CD14-positive monocyte (primary cell): ENCODE measurements at regions of chr7 and their contacts with region 1.

Region 1: DNA sequence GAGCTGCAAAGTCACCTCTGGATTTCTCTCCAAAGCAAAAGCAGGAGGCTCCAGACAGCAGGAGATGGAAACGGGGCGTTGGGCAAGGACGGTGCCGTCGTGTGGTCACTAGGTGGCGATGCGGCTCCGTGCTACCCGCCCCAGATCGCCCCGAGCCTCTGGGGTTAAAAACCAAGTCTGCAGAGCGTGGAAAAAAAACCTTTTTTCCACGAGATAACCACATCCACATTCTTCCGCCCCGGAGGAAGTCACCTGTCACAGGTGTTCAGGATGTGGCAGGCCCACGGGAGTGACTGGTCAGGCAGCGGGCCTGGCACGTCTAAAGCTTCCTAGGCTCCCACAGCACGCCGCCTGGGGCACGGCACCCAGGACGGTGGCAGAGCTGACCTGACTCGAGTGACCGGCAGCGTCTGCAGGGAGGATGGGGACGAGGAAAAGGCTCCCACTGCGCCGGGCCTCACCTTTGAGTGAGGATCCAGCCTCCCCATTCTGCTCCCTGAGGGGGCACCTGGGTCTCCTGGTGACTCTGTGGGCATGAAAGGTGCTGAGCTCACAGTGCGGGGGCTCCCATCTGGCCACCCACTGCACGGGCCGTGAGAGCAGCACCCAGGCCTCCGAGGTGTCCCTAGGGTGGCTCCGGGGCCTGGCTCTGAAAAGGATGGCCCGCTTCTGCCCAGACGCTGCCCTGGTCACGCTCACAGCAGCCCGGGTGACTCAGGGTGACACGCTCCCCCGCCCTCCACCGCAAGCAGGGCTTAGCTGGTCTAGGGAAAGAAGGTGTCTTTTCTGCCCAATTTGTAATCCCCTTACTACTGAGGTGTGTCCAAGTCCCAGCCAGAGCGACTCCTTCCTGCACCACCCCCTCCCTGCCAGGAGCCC is 71.3 kb upstream of the TNRC18 start:
- DNase-seq: peak; percentile 69 to 73 (median 70)
- H3K4me3 ChIP-seq: peak overlapping the region; percentile 16 to 72 (median 44)
- H3K4me3 Mint-ChIP-seq: peak overlapping the region; percentile 66 to 80
- H3K27ac ChIP-seq: peak overlapping the region in 1 of 2 donors; percentile 63
- H3K27ac Mint-ChIP-seq: peak overlapping the region in 4 of 7 donors; percentile 58 to 75 (median 64)
- H3K4me1 ChIP-seq: peaks cover 24 to 35% of the 10 kb centered on the region in 2 donors
- H3K4me1 Mint-ChIP-seq: peaks cover 37% of the 10 kb centered on the region
- H3K27me3 ChIP-seq: no peaks in the 10 kb centered on the region
- H3K27me3 Mint-ChIP-seq: peaks cover 0 to 3% (median 2%) of the 10 kb centered on the region in 3 donors
- CTCF ChIP-seq: peak; percentile 99

Region 2: GRCh38 chr7:5421714-5422395 is 73.1 kb before region 1 on chr7:
- intact Hi-C with region 1: no loop called
- DNase-seq: peak in 1 of 3 donors; percentile 37
- H3K4me3 ChIP-seq: peak overlapping the region; percentile 93 to 100 (median 100)
- H3K4me3 Mint-ChIP-seq: peak overlapping the region; percentile 93
- H3K27ac ChIP-seq: peak overlapping the region; percentile 83 to 93
- H3K27ac Mint-ChIP-seq: peak overlapping the region; percentile 75 to 95 (median 87)
- H3K4me1 ChIP-seq: peaks cover 21 to 27% of the 10 kb centered on the region in 2 donors
- H3K4me1 Mint-ChIP-seq: peaks cover 28% of the 10 kb centered on the region
- H3K27me3 ChIP-seq: no peaks in the 10 kb centered on the region
- H3K27me3 Mint-ChIP-seq: peaks cover 0 to 3% (median 0%) of the 10 kb centered on the region in 3 donors
- CTCF ChIP-seq: no peak

Region 3: DNA sequence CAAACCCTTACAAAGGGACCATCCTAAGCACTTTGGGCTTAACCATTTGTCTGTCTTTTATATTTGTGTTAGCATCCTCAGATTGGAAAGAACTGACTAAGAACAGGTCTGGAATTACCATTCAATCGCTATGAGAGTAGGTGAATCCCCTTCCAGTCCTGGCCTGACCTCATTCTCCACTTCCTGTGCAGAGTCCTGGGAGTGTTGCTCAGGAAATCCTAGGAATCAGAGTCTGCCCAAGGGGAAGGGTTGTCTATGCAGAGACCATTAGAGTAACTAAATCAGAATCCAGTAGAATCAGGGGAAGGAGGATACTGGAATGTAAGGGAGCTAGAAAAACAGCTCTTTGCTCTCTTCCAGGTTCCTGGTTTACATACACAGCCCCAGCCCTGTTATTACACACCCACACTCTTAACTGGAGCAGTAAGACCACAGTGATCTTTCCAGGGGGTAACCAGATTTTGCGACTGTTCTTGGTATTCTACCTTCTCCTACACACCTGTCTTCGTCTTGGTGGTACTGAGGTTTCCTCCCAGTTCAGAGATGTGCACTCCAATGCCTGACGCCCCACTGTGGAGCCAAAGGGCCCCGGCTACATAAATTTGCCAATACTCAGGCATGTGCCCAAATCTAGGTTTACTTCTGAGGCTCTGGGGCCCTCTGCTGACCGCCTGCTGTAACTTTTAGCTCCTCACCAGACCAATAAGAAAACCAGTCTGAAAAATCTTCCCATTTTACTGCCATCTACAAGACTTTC is 182.8 kb after region 1 on chr7:
- intact Hi-C with region 1: loop called (anchors 5 kb)
- DNase-seq: peak; percentile 71 to 77 (median 77)
- H3K4me3 ChIP-seq: peak overlapping the region in 1 of 3 experiments; percentile 18
- H3K4me3 Mint-ChIP-seq: no peak overlapping the region
- H3K27ac ChIP-seq: peak overlapping the region; percentile 88 to 93
- H3K27ac Mint-ChIP-seq: peak overlapping the region; percentile 98 to 99 (median 99)
- H3K4me1 ChIP-seq: peaks cover 64 to 66% of the 10 kb centered on the region in 2 donors
- H3K4me1 Mint-ChIP-seq: peaks cover 66% of the 10 kb centered on the region
- H3K27me3 ChIP-seq: no peaks in the 10 kb centered on the region
- H3K27me3 Mint-ChIP-seq: peaks cover 0 to 3% (median 0%) of the 10 kb centered on the region in 3 donors
- CTCF ChIP-seq: peak; percentile 84

Region 4: GRCh38 chr7:5704534-5704922 is 209.6 kb after region 1 on chr7:
- intact Hi-C with region 1: loop called (anchors 2 kb)
- DNase-seq: peak; percentile 80 to 88 (median 86)
- H3K4me3 ChIP-seq: no peak overlapping the region
- H3K4me3 Mint-ChIP-seq: no peak overlapping the region
- H3K27ac ChIP-seq: peak overlapping the region in 1 of 2 donors; percentile 89
- H3K27ac Mint-ChIP-seq: peak overlapping the region in 3 of 7 donors; percentile 51 to 81 (median 55)
- H3K4me1 ChIP-seq: peaks cover 34 to 47% of the 10 kb centered on the region in 2 donors
- H3K4me1 Mint-ChIP-seq: peaks cover 38% of the 10 kb centered on the region
- H3K27me3 ChIP-seq: no peaks in the 10 kb centered on the region
- H3K27me3 Mint-ChIP-seq: no peaks in the 10 kb centered on the region
- CTCF ChIP-seq: peak; percentile 92